Activated naive CD4-positive, alpha-beta T cell treated with anti-CD3 and anti-CD28 coated beads for 36 hours (primary cell): ENCODE measurements at regions of chr2 and their contacts with region 1.

Region 1: GRCh38 chr2:237674731-237675276 is 47.4 kb downstream of the LRRFIP1 start:
- DNase-seq: peak; percentile 85
- H3K4me3 Mint-ChIP-seq: peak overlapping the region; percentile 77
- H3K27ac Mint-ChIP-seq: peak overlapping the region; percentile 80
- H3K4me1 Mint-ChIP-seq: peaks cover 45% of the 10 kb centered on the region
- H3K27me3 Mint-ChIP-seq: no peaks in the 10 kb centered on the region

Region 2: DNA sequence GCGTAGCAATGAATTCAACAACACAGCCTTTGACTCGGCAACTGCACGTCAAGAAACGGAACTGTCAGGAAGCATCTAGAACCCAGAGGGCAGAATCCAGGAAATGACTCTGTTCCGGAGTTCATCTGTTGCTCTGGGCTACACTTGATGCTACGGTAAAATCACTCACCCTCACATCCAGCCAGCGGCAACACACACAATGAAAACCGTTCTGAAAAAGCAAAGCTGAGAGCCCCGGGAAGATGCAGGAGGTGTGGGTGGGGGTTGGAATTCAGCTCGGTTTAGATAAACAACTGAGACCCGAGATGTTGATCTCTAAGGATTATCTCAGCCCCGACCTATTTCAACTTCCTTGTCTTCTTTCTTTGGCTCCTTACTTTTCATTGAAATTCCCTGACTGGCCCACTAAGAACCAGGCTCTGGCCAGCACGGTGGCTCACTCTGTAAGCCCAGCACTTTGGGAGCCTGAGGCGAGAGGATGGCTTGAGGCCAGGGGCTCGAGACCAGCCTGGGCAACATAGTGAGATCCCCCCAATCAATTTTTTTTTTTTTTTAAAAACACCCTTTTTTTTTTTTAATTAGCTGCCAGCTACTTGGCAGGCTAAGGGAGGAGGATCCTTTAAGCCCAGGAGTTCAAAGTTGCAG is 71.0 kb before region 1 on chr2:
- CTCF ChIA-PET with region 1: no interaction called
- intact Hi-C with region 1: loop called (anchors 2 kb)
- DNase-seq: peak; percentile 82
- H3K4me3 Mint-ChIP-seq: peak overlapping the region; percentile 20
- H3K27ac Mint-ChIP-seq: peak overlapping the region; percentile 68
- H3K4me1 Mint-ChIP-seq: peaks cover 18% of the 10 kb centered on the region
- H3K27me3 Mint-ChIP-seq: no peaks in the 10 kb centered on the region

Region 3: DNA sequence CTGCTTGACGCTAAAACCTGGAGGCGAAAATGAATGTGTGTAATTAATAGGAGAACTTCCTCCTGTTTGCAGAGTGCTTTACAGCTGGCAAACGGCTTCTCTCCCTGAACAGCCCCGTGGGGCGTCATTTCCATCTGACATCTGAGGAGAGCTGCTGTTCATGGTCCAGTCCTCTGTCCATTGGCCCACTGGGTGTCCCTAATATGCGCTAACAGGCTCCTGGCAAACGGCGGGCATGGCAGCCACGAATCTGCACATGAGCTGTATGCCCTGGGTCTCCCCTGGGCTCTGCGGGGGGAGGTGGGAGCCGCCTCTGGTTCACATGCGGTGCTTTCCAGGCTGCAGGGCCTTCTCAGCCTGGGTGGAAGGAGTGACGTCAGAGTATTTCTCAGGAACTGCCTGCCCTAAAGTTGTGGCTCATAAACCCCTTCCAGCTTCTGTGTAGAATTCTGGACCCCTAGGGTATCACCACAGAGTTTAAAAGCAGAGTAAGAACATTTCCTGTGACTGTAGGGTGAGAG is 25.8 kb after region 1 on chr2:
- CTCF ChIA-PET with region 1: interaction called, 142 read pairs
- intact Hi-C with region 1: loop called (anchors 1 kb)
- DNase-seq: peak; percentile 84
- H3K4me3 Mint-ChIP-seq: peak overlapping the region; percentile 40
- H3K27ac Mint-ChIP-seq: peak overlapping the region; percentile 86
- H3K4me1 Mint-ChIP-seq: peaks cover 95% of the 10 kb centered on the region
- H3K27me3 Mint-ChIP-seq: no peaks in the 10 kb centered on the region

Region 4: GRCh38 chr2:237731663-237732062 is 56.9 kb after region 1 on chr2:
- CTCF ChIA-PET with region 1: interaction called, 6 read pairs
- intact Hi-C with region 1: loop called (anchors 1 kb)
- DNase-seq: peak; percentile 66
- H3K4me3 Mint-ChIP-seq: no peak overlapping the region
- H3K27ac Mint-ChIP-seq: peak overlapping the region; percentile 17
- H3K4me1 Mint-ChIP-seq: peaks cover 46% of the 10 kb centered on the region
- H3K27me3 Mint-ChIP-seq: no peaks in the 10 kb centered on the region

Region 5: DNA sequence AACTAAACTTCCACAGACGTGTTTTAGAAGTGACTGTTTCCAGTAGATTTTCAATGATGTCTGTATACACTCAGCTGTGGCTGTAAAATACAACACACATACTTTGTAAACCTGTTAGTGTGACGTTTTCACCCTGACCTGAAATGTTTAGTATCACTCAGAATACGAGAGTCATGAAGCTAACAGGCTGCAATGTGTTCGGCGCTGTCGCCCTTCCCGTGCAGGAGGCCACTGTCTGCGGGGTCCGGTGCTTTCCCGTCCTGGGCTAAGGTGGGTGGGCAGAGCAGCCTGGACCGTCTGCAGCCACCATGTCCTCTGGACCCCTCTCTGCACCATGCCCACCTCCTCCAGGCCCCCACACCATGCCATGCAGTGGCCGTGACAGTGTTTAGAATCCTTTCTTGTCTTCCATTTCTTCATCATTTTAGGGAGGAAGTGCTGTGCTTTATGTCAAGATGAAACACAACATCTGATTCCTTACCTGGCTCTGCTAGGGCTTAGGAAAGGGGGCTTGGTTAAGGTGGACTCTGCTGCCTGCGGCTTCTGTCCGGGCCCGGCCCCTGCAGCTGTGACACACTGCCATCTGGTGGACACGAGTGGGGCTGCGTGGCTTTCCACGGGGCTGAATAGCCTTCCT is 69.9 kb after region 1 on chr2:
- CTCF ChIA-PET with region 1: interaction called, 146 read pairs
- intact Hi-C with region 1: loop called (anchors 1 kb)
- DNase-seq: peak; percentile 86
- H3K4me3 Mint-ChIP-seq: no peak overlapping the region
- H3K27ac Mint-ChIP-seq: peak overlapping the region; percentile 76
- H3K4me1 Mint-ChIP-seq: peaks cover 36% of the 10 kb centered on the region
- H3K27me3 Mint-ChIP-seq: no peaks in the 10 kb centered on the region

Region 6: GRCh38 chr2:237818066-237818473 is 143.3 kb after region 1 on chr2:
- CTCF ChIA-PET with region 1: no interaction called
- intact Hi-C with region 1: loop called (anchors 5 kb)
- DNase-seq: no peak
- H3K4me3 Mint-ChIP-seq: no peak overlapping the region
- H3K27ac Mint-ChIP-seq: no peak overlapping the region
- H3K4me1 Mint-ChIP-seq: peaks cover 26% of the 10 kb centered on the region
- H3K27me3 Mint-ChIP-seq: no peaks in the 10 kb centered on the region

Region 7: DNA sequence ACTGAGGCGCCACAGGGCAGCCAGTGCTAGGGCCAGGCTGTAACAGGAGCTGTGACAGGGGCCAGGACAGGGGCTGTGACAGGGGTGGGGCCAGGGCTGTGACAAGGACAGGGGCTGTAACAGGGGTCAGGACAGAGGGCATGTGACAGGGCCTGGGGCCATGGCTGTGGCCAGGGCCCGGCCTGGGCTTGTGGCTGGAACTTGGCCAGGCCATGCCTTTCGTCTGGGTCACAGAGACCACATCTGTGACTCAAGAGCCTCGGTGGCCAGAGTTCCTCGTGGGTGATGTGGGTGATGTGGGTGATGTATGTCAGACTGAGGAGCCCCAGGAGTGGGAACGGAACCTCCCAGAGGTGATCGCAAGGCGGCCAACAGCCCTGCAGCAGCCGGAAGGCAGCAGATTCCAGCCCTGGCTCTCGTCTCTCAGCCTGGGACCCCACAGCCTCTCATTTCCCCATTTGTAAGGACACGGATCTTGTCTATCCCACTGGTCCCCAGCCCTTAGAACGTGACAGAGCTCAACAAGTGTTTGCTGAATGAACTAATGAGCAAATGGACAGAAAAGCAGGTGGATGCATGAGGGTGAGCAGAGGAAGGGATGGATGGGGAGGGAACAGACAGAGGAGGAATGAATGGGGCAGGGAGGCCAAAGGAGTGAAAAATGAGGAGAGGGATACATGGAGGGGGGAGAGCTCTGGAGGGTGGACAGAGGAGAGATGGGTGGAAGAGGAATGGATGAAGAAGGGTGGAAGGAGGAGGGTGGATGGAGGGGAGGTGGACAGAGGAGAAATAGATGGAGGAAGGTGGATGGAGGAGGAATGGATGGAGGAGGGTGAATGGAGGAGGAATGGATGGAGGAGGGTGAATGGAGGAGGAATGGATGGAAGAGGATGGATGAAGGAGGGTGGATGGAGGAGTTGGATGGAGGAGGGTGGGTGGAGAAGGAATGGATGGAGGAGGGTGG is 442.7 kb after region 1 on chr2:
- CTCF ChIA-PET with region 1: no interaction called
- intact Hi-C with region 1: no loop called
- DNase-seq: no peak
- H3K4me3 Mint-ChIP-seq: no peak overlapping the region
- H3K27ac Mint-ChIP-seq: no peak overlapping the region
- H3K4me1 Mint-ChIP-seq: no peaks in the 10 kb centered on the region
- H3K27me3 Mint-ChIP-seq: peaks cover 9% of the 10 kb centered on the region

Region 8: DNA sequence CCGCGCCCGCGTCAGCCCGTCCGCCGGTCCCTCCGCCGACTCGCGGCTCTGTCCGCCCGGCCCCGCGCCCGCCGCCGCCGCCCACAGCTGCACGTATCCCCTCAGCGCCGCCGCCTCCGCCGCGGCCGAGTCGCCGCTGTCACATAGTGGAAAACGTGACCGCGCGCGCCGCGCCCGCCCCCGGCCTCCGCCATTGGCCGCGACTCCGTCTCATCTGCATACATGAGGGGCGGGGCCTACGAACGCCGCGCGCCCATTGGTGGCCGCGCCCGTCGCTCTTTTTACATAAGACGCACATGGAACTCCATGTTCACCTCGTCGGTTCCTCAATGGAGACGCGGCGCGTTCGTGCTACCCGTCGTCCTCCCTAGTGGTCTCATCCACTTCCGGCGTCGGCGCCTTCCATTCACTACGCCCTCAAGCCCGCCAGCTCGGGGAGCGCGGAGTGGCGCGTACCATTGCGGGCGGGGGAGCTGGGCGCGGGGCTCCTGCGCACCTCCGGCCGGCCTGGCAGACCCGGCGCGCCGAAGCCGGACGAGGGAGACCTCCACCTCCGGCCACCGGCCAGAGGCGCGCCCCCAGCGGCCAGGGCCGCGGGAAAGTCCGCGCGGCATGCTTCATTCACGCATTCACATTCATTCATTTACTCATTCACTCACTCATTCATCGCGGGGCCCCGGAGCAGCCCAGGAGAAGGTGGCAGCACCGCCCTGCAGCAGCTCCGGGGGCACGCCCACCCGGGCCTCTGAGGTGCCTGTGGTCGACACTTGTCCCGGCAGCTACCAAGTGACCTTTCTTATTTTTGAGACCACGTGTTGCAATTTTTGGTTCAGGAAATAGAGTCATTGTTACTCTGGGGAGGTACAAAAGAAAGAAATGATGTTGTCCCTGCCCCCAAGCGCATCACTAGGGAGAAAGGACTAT is 614.1 kb after region 1 on chr2:
- CTCF ChIA-PET with region 1: no interaction called
- intact Hi-C with region 1: loop called (anchors 5 kb)
- DNase-seq: peak; percentile 97
- H3K4me3 Mint-ChIP-seq: peak overlapping the region; percentile 89
- H3K27ac Mint-ChIP-seq: peak overlapping the region; percentile 85
- H3K4me1 Mint-ChIP-seq: peaks cover 36% of the 10 kb centered on the region
- H3K27me3 Mint-ChIP-seq: no peaks in the 10 kb centered on the region